ENCODE measurements at regions of chr1 and their contacts with region 1.

Region 1: GRCh38 chr1:177948336-177948972 is 21.4 kb downstream of the SEC16B start:
- DNase-seq: peak; percentile 74
- H3K4me3 Mint-ChIP-seq: no peak overlapping the region
- H3K27ac Mint-ChIP-seq: no peak overlapping the region
- H3K4me1 Mint-ChIP-seq: no peaks in the 10 kb centered on the region
- H3K27me3 Mint-ChIP-seq: no peaks in the 10 kb centered on the region
- CTCF ChIP-seq: peak; percentile 93

Region 2: GRCh38 chr1:177256153-177257075 is 692.0 kb before region 1 on chr1:
- CTCF ChIA-PET with region 1: no interaction called
- intact Hi-C with region 1: loop called (anchors 2 kb)
- DNase-seq: peak; percentile 92
- H3K4me3 Mint-ChIP-seq: peak overlapping the region; percentile 28
- H3K27ac Mint-ChIP-seq: peak overlapping the region; percentile 45
- H3K4me1 Mint-ChIP-seq: peaks cover 34% of the 10 kb centered on the region
- H3K27me3 Mint-ChIP-seq: no peaks in the 10 kb centered on the region
- CTCF ChIP-seq: peak; percentile 92

Region 3: GRCh38 chr1:177567407-177567806 is 381.0 kb before region 1 on chr1:
- CTCF ChIA-PET with region 1: no interaction called
- intact Hi-C with region 1: loop called (anchors 5 kb)
- DNase-seq: peak; percentile 35
- H3K4me3 Mint-ChIP-seq: no peak overlapping the region
- H3K27ac Mint-ChIP-seq: no peak overlapping the region
- H3K4me1 Mint-ChIP-seq: no peaks in the 10 kb centered on the region
- H3K27me3 Mint-ChIP-seq: peaks cover 27% of the 10 kb centered on the region
- CTCF ChIP-seq: peak; percentile 25

Region 4: DNA sequence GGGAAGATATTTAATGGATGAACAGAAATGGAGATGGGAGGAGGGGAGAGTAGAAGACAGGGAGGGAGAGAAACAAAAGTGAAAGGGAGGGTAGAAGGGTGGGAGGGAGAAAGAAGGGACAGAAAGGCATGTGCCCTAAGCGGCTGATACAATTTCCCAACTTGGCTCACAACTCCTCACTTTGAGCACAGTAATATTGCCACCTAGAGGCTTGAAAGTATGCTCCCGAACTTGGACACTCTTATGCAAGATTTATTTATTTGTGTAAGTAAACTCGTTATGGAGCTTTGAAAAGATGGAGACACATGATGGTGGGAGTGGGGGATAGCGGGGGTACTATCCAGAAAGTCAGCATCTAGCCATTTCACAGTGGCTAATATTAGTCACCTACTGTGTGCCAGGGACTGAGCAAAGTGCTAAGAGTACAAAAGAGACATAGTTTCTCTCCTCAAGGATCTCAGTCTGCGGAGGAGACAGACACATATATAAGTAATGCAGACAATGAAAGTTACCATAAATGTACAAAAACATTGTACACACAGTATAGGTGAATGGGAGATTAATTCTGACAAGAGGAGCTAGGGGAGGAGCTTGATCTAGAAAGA is 168.3 kb before region 1 on chr1:
- CTCF ChIA-PET with region 1: no interaction called
- intact Hi-C with region 1: loop called (anchors 5 kb)
- DNase-seq: peak; percentile 23
- H3K4me3 Mint-ChIP-seq: no peak overlapping the region
- H3K27ac Mint-ChIP-seq: no peak overlapping the region
- H3K4me1 Mint-ChIP-seq: no peaks in the 10 kb centered on the region
- H3K27me3 Mint-ChIP-seq: peaks cover 64% of the 10 kb centered on the region
- CTCF ChIP-seq: peak; percentile 52

Region 5: DNA sequence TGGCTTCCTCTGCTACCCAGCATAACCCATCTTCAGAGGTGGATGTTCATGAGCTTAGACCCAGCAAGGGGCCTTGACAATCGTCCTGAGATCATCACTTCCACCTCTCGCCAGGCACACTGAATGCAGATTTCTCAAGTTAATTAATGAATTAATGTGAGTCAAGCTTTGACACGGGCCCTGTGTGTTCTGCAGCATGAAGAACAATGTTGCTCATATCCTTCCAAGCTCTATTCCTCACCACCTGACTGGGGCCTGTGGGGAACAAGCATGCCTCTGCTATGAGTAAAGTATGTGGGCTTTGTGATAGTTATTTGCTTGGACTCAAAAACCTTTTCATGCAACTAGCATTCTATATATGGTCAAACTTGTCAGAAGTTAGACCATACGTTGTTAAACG is 100.6 kb before region 1 on chr1:
- CTCF ChIA-PET with region 1: no interaction called
- intact Hi-C with region 1: no loop called
- DNase-seq: no peak
- H3K4me3 Mint-ChIP-seq: no peak overlapping the region
- H3K27ac Mint-ChIP-seq: no peak overlapping the region
- H3K4me1 Mint-ChIP-seq: no peaks in the 10 kb centered on the region
- H3K27me3 Mint-ChIP-seq: peaks cover 62% of the 10 kb centered on the region
- CTCF ChIP-seq: no peak

Region 6: DNA sequence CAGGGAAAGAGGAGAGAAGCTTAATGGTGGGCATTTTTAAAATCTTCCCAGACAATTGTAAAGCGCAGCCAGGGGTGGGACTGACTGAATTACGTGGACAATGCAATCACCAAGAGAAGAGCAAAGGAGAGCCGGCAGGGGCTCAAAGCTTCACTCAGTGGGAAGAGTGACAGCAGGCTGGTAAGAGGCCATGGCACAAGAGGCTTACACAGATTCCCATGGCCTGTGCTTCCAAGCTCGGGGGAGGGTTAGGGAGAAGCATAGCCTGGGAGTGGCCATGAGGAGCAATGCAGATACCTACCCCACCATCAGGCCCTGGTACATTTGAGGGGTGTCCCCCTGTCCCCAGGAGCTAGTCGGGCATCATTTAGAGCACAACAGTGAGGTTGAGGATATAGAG is 48.5 kb after region 1 on chr1:
- CTCF ChIA-PET with region 1: no interaction called
- intact Hi-C with region 1: no loop called
- DNase-seq: no peak
- H3K4me3 Mint-ChIP-seq: no peak overlapping the region
- H3K27ac Mint-ChIP-seq: no peak overlapping the region
- H3K4me1 Mint-ChIP-seq: no peaks in the 10 kb centered on the region
- H3K27me3 Mint-ChIP-seq: no peaks in the 10 kb centered on the region
- CTCF ChIP-seq: no peak

Region 7: GRCh38 chr1:178031856-178032320 is 83.4 kb after region 1 on chr1:
- CTCF ChIA-PET with region 1: interaction called, 4 read pairs
- intact Hi-C with region 1: loop called (anchors 5 kb)
- DNase-seq: peak; percentile 92
- H3K4me3 Mint-ChIP-seq: no peak overlapping the region
- H3K27ac Mint-ChIP-seq: no peak overlapping the region
- H3K4me1 Mint-ChIP-seq: peaks cover 15% of the 10 kb centered on the region
- H3K27me3 Mint-ChIP-seq: no peaks in the 10 kb centered on the region
- CTCF ChIP-seq: peak; percentile 85

Region 8: DNA sequence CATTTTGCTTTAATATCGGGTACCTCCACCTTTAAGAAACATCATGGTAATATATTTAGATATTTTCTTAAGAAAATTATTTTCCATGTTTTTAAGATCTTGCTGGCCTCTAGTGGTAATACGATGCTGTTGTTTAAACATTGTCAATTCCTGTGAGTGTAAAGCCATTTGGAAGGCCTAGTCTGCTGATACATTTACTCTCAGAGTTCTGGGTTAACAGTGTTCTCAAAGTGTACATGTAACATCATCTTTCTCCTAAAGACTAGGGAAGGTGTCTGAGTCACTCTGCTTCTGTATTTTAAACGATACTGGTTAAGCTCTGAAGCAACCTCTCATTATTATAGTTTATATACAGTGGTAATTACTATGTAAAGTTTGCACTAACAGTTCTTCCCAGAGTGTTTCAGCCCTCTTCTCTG is 334.5 kb after region 1 on chr1:
- CTCF ChIA-PET with region 1: no interaction called
- intact Hi-C with region 1: loop called (anchors 1 kb)
- DNase-seq: no peak
- H3K4me3 Mint-ChIP-seq: no peak overlapping the region
- H3K27ac Mint-ChIP-seq: no peak overlapping the region
- H3K4me1 Mint-ChIP-seq: peaks cover 39% of the 10 kb centered on the region
- H3K27me3 Mint-ChIP-seq: no peaks in the 10 kb centered on the region
- CTCF ChIP-seq: no peak

Measured in Calu3 (cell line).